ENCODE measurements at regions of chr5 and their contacts with region 1.

Region 1: DNA sequence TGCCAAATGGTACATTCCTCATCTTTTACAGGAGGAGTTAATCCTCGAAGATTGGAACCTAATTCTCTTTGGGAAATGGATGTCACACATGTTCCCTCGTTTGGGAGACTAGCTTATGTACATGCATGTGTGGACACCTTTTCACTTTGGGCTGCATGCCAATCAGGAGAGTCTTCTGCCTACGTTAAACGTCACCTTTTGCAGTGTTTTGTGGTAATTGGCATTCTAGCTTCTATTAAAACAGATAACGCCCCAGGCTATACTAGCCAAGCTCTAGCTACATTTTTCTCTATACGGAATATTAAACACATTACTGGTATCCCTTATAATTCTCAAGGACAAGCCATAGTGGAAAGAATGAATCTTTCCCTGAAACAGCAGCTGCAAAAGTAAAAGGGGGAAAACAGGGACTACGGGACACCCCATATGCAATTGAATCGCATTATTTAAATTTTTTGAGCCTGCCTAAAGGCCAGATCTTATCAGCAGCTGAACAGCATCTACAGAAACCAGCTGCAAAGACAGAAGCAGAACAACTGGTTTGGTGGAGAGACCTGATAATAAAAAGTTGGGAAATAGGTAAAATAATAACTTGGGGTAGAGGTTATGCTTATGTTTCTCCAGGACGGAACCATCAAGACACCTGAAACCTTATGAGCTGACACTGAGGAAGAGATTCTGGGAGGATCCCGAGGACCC is 23.7 kb upstream of the PDCD6 start:
- DNase-seq: no peak
- H3K4me3 ChIP-seq: no peak overlapping the region
- H3K4me3 Mint-ChIP-seq: no peak overlapping the region
- H3K27ac ChIP-seq: no peak overlapping the region
- H3K27ac Mint-ChIP-seq: no peak overlapping the region
- H3K4me1 ChIP-seq: no peaks in the 10 kb centered on the region
- H3K4me1 Mint-ChIP-seq: no peaks in the 10 kb centered on the region
- H3K27me3 ChIP-seq: no peaks in the 10 kb centered on the region
- H3K27me3 Mint-ChIP-seq: no peaks in the 10 kb centered on the region
- CTCF ChIP-seq: no peak

Region 2: GRCh38 chr5:298737-299125 is 51.0 kb after region 1 on chr5:
- intact Hi-C with region 1: no loop called
- DNase-seq: no peak
- H3K4me3 ChIP-seq: no peak overlapping the region
- H3K4me3 Mint-ChIP-seq: no peak overlapping the region
- H3K27ac ChIP-seq: no peak overlapping the region
- H3K27ac Mint-ChIP-seq: no peak overlapping the region
- H3K4me1 ChIP-seq: peaks cover 0 to 2% of the 10 kb centered on the region in 2 donors
- H3K4me1 Mint-ChIP-seq: peaks cover 15% of the 10 kb centered on the region
- H3K27me3 ChIP-seq: no peaks in the 10 kb centered on the region
- H3K27me3 Mint-ChIP-seq: peaks cover 0 to 6% (median 2%) of the 10 kb centered on the region in 3 donors
- CTCF ChIP-seq: no peak

Region 3: DNA sequence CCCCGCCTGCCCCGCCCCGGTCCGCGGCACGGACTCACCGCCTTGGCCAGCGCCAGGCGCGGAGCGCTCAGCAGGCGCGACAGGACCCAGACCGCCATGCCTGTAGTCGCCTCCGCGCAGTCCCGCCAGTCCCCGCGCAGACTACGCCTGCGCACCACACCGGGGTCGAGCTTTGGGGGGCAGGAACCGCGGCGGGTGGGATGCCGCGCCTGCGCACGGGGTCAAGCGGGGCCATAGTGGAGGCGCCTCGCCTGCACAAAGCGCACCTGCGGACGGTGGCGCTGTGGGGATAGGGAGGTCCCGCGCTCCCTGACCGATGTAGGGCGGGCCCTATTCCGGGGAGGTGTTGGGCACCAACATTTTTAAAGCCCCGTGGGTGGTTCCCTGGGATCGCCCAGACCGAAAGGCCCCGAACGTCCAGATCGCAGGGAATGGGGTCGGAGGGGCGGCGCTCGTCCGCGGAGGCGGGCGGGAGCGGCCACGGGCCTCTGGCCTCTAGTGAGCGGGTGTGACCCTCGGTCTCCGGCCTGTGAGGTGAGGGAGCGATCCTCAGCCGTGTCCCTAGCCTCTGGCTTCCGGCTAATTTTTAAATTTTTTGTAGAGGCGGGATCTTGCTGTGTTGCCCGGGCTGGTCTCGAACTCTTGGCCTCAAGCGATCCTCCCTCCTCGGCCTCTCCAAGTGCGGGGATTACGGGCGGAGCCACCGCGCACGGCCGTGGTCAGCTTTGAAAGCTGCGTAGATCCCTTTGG is 1346.8 kb after region 1 on chr5:
- intact Hi-C with region 1: loop called in 1 of 2 experiments (anchors 10 kb)
- DNase-seq: peak; percentile 9 to 22 (median 19)
- H3K4me3 ChIP-seq: peak overlapping the region; percentile 27 to 71 (median 33)
- H3K4me3 Mint-ChIP-seq: peak overlapping the region; percentile 63 to 85
- H3K27ac ChIP-seq: no peak overlapping the region
- H3K27ac Mint-ChIP-seq: peak overlapping the region in 1 of 7 donors; percentile 46
- H3K4me1 ChIP-seq: peaks cover 12 to 15% of the 10 kb centered on the region in 2 donors
- H3K4me1 Mint-ChIP-seq: peaks cover 17% of the 10 kb centered on the region
- H3K27me3 ChIP-seq: peaks cover 11 to 19% of the 10 kb centered on the region in 2 donors
- H3K27me3 Mint-ChIP-seq: peaks cover 38 to 45% (median 45%) of the 10 kb centered on the region in 3 donors
- CTCF ChIP-seq: no peak